Mammary epithelial cell (primary cell): ENCODE measurements at regions of chr6 and their contacts with region 1.

Region 1: DNA sequence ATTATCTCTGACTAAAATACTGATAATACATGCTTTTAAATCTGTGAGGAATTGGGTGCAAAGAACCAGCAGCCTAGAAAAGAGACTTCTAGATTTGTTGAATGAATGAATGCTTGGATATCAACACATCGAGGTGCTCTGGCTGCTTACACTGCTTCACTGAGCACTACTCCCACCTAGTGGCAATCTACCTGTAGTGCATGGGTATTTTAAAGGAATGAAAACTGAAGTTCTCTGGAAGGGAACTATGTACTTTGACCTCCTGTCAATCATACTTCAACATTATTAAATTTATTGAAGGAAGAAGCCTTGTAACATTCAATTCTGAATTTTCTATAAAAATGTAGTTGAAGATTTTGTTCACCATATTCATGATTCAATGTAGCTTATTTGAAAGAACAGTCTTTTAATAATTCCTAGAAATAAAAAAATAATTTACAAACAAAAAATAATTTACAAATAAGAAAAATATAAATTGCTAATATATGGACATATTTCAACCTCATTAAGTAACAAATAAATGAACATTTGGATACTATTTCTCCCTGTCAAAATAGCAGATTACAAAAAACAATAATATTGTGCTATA is 111.2 kb upstream of the MMS22L start:
- DNase-seq: peak; percentile 29
- H3K4me3 ChIP-seq: no peak overlapping the region
- H3K27ac ChIP-seq: no peak overlapping the region
- H3K4me1 ChIP-seq: no peaks in the 10 kb centered on the region
- H3K27me3 ChIP-seq: no peaks in the 10 kb centered on the region
- CTCF ChIP-seq: peak; percentile 88 to 93

Region 2: DNA sequence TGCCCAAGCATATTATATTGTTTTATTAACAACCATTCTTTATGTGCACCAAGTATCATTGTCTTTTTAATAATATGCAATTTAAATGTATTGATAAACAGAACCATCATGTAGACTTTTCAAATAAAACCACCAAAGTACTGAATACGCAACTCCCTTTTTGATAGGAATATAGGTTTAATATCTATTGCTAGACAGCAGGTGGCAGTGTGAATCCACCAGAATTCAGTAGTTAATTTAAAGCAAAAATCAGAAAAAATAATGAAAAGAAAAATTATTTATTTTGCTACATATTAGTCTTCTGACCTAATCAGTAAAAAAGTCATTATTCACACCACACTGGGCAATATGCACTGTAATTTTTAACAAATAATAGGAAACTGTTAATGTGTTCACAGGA is 326.0 kb before region 1 on chr6:
- CTCF ChIA-PET with region 1: no interaction called
- dilution Hi-C with region 1: no loop called
- in situ Hi-C with region 1: loop called in 1 of 2 experiments (anchors 10 kb)
- intact Hi-C with region 1: loop called (anchors 1 kb)
- DNase-seq: peak; percentile 3
- H3K4me3 ChIP-seq: no peak overlapping the region
- H3K27ac ChIP-seq: no peak overlapping the region
- H3K4me1 ChIP-seq: no peaks in the 10 kb centered on the region
- H3K27me3 ChIP-seq: peaks cover 2% of the 10 kb centered on the region
- CTCF ChIP-seq: peak; percentile 41 to 58

Region 3: DNA sequence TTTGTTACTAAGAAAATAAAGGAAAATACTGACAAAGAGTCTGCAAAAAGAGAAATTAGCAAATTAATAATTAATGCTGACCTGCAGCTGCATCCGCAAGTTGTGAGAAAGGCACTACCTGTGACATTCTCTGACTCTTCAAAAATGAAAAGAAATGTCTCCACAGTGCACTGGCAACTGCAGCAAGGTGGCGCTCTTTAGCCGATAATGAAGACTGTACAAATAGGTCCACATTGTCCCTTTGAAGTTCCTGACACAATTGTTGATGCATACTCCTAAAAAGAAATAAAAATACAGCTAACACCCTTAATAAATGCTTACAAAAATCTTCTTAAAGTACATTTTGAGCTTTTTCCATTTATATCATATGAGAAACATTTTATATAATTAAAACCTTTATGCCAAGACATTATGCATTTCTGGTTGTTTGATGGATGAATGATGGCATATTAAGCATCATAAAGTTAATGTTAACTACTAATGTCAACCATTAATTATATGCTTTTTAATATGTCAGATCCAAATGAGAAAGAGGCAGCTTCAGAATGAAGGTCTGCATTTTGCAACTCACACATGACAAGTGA is 207.7 kb before region 1 on chr6:
- CTCF ChIA-PET with region 1: no interaction called
- dilution Hi-C with region 1: no loop called
- in situ Hi-C with region 1: loop called (anchors 10 kb)
- intact Hi-C with region 1: loop called (anchors 1 kb)
- DNase-seq: peak; percentile 48
- H3K4me3 ChIP-seq: no peak overlapping the region
- H3K27ac ChIP-seq: no peak overlapping the region
- H3K4me1 ChIP-seq: no peaks in the 10 kb centered on the region
- H3K27me3 ChIP-seq: no peaks in the 10 kb centered on the region
- CTCF ChIP-seq: peak; percentile 87 to 97

Region 4: GRCh38 chr6:97215157-97215769 is 179.0 kb before region 1 on chr6:
- CTCF ChIA-PET with region 1: interaction called, 15 read pairs
- dilution Hi-C with region 1: no loop called
- in situ Hi-C with region 1: no loop called
- intact Hi-C with region 1: loop called (anchors 1 kb)
- DNase-seq: peak; percentile 8
- H3K4me3 ChIP-seq: no peak overlapping the region
- H3K27ac ChIP-seq: no peak overlapping the region
- H3K4me1 ChIP-seq: no peaks in the 10 kb centered on the region
- H3K27me3 ChIP-seq: no peaks in the 10 kb centered on the region
- CTCF ChIP-seq: peak; percentile 21 to 63

Region 5: GRCh38 chr6:97282726-97283617 is 111.3 kb before region 1 on chr6 and contains the start of gene MMS22L:
- CTCF ChIA-PET with region 1: no interaction called
- dilution Hi-C with region 1: no loop called
- in situ Hi-C with region 1: no loop called
- intact Hi-C with region 1: loop called (anchors 5 kb)
- DNase-seq: peak; percentile 90
- H3K4me3 ChIP-seq: peak within 1 kb of the TSS; percentile 77 to 99 (median 94)
- H3K27ac ChIP-seq: peak within 1 kb of the TSS; percentile 77
- H3K4me1 ChIP-seq: no peaks in the 10 kb centered on the region
- H3K27me3 ChIP-seq: no peaks in the 10 kb centered on the region
- CTCF ChIP-seq: no peak
- total RNA-seq, gene MMS22L: 11.3 to 20.2 TPM

Region 6: GRCh38 chr6:97422171-97422570 is 27.9 kb after region 1 on chr6:
- CTCF ChIA-PET with region 1: no interaction called
- dilution Hi-C with region 1: no loop called
- in situ Hi-C with region 1: no loop called
- intact Hi-C with region 1: no loop called
- DNase-seq: no peak
- H3K4me3 ChIP-seq: no peak overlapping the region
- H3K27ac ChIP-seq: no peak overlapping the region
- H3K4me1 ChIP-seq: no peaks in the 10 kb centered on the region
- H3K27me3 ChIP-seq: peaks cover 3% of the 10 kb centered on the region
- CTCF ChIP-seq: no peak

Region 7: GRCh38 chr6:97572943-97573342 is 178.7 kb after region 1 on chr6:
- CTCF ChIA-PET with region 1: no interaction called
- dilution Hi-C with region 1: no loop called
- in situ Hi-C with region 1: no loop called
- intact Hi-C with region 1: no loop called
- DNase-seq: no peak
- H3K4me3 ChIP-seq: no peak overlapping the region
- H3K27ac ChIP-seq: no peak overlapping the region
- H3K4me1 ChIP-seq: no peaks in the 10 kb centered on the region
- H3K27me3 ChIP-seq: no peaks in the 10 kb centered on the region
- CTCF ChIP-seq: no peak

Region 8: DNA sequence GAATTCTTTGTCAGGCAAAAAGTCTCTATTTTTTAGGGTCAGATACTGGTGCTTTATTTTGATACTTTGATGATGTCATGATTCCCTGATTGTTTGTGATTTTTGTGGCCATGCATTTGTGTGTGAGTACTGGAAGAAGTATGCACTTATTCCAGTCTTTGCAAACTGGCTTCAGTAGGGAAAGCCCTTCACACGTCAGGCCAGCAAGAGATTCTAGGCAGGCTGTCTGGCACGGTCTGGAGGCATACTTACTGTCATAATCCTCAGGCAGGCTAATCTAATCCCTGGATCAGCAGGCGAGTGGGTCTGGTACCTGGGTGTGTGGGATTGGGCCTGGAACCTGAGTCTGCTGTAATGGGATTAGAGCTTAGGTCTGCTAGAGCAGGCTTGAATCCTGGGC is 280.5 kb after region 1 on chr6:
- CTCF ChIA-PET with region 1: no interaction called
- dilution Hi-C with region 1: no loop called
- in situ Hi-C with region 1: no loop called
- intact Hi-C with region 1: no loop called
- DNase-seq: peak; percentile 0
- H3K4me3 ChIP-seq: no peak overlapping the region
- H3K27ac ChIP-seq: no peak overlapping the region
- H3K4me1 ChIP-seq: no peaks in the 10 kb centered on the region
- H3K27me3 ChIP-seq: peaks cover 1% of the 10 kb centered on the region
- CTCF ChIP-seq: no peak